Right ventricle myocardium inferior (tissue), 1 donor: ENCODE measurements at regions of chr19 and their contacts with region 1.

Region 1: DNA sequence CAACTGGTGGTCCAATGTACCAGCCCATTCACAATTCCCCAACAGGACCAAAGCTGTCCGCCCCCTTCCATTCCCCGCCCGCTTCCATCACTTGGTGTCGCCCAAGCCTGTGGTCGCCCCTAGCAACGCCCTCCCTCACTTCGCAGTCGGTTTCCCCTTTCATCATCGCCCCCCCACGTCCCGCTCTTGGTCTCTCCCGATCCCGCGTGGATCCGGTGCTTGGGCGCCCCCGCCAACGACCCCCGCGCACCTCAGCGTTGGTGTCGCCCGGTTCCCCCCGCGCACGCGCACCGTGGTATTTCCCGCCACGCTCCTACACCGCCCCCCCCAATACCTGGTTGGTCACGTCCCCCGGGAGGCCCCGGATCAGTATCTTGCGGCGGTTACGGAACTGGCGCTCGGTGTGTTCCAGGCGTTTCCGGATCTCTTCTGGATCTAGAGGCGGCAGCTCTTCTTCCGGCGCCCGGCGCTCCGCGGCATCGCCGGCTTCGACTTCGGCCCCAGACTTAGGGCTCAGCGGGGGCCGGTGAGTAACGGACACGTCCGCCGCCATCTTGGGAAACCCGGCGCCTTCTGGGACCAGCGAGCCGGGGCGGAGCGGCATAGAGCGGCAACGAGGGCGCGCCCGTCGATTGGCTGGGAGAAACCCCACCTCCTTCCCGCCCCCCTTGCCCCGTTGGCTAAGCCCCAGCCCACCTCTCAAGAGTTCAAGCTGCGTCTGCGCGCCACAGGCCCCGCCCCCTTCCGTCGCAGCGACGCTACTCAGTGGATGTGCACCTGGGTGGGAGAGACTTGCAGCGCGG is at the start of gene RAVER1:
- DNase-seq: peak; percentile 99
- ATAC-seq: peak; percentile 94
- total RNA-seq, gene RAVER1: 10.1 TPM

Region 2: DNA sequence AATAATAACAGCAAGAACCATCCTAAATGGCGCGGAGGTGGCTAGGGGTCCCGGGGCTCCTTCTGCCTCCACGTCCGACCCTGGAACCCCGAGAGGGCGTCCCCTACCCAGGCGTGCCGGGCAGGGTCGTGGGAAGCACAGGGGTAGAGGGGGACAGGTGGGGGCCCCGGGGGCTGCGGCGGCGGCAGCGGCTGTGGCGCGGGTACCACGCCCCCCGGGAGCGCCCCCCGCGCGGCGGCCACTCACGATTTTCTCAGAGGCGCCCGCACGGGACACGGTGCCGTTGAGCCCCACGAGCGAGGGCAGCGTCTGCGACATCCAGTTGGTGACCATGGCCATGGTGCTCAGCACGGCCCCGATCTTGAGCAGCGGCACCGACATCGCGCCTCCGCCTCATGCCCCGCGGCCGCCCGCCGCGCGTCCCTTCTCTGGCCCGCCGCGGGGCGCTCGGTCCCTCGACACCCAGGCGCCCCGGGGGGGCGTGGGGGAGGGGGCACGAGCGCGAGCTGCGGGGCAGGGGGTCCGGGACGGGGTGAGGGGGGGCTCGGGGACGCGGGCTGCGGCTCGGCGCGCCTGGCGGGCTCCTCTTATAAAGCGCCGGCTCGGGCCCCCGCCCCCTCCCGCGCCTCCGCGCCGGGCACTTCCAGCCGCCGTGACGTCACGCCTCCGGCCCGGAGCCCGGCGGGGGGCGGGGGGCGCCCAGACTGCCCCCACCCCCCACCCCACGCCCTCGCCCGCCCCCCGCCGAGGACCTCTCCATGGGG is 419.7 kb before region 1 on chr19:
- intact Hi-C with region 1: no loop called
- DNase-seq: no peak
- ATAC-seq: no peak

Region 3: GRCh38 chr19:10269333-10270179 is 63.6 kb before region 1 on chr19:
- intact Hi-C with region 1: loop called (anchors 2 kb)
- DNase-seq: peak; percentile 94
- ATAC-seq: peak; percentile 84

Region 4: GRCh38 chr19:10353793-10354391 is 20.7 kb after region 1 on chr19:
- intact Hi-C with region 1: loop called (anchors 1 kb)
- DNase-seq: peak; percentile 83
- ATAC-seq: peak; percentile 80

Region 5: DNA sequence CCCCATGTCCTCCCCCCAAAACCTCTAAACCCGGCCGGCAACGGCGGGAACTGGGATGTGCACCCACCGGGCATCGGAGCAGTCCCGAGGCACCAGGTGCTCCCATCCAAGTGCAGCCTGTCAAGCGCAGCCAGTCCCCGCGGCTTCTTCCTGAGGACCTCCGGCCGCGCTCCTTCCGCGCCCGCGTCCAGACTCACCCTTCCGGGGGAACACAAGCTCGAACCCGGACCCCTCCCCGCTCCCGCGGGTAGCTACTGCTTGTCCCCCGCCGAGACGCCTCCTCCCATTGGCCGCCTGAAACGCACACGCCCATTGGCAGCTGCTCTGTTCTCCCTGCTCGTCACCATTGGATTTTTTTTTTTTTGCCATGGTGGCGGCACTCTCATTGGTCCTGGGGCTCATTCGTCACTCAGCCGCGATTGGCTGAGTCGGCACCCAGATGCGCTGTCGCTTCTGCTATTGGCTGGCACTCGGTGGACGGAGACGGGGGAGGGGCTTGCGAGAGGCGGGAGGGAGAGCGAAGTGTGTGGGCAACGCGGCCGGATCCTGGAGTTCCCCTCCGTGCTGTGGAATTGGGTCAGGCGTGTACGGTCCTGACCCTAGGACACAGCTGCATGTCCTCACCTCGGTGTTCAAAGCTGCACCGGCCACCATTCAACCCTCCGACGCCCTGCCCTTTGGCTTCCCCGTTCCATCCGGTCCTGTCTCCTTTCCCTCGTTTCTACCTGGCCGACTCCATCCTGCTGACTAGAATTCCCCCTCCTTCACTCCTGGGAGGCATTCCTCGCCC is 47.4 kb after region 1 on chr19 and contains the start of gene TYK2:
- intact Hi-C with region 1: loop called (anchors 1 kb)
- DNase-seq: peak; percentile 98
- ATAC-seq: peak; percentile 99
- total RNA-seq, gene TYK2: 67.1 TPM